Pancreas (tissue), 10 donors: ENCODE measurements at regions of chr2 and their contacts with region 1.

Region 1: GRCh38 chr2:43226558-43226954 is at the start of gene ZFP36L2:
- DNase-seq: peak; percentile 95 to 99 (median 98)
- ATAC-seq: peak; percentile 66 to 79 (median 74)
- H3K4me3 ChIP-seq: peak within 1 kb of the TSS; percentile 87 to 98 (median 92)
- H3K27ac ChIP-seq: peak within 1 kb of the TSS; percentile 86 to 98 (median 96)
- H3K4me1 ChIP-seq: peaks cover 21 to 24% (median 21%) of the 10 kb centered on the region in 3 donors
- H3K27me3 ChIP-seq: no peaks in the 10 kb centered on the region
- CTCF ChIP-seq: no peak
- total RNA-seq, gene ZFP36L2: 36.8 to 117 (median 64.8) TPM

Region 2: DNA sequence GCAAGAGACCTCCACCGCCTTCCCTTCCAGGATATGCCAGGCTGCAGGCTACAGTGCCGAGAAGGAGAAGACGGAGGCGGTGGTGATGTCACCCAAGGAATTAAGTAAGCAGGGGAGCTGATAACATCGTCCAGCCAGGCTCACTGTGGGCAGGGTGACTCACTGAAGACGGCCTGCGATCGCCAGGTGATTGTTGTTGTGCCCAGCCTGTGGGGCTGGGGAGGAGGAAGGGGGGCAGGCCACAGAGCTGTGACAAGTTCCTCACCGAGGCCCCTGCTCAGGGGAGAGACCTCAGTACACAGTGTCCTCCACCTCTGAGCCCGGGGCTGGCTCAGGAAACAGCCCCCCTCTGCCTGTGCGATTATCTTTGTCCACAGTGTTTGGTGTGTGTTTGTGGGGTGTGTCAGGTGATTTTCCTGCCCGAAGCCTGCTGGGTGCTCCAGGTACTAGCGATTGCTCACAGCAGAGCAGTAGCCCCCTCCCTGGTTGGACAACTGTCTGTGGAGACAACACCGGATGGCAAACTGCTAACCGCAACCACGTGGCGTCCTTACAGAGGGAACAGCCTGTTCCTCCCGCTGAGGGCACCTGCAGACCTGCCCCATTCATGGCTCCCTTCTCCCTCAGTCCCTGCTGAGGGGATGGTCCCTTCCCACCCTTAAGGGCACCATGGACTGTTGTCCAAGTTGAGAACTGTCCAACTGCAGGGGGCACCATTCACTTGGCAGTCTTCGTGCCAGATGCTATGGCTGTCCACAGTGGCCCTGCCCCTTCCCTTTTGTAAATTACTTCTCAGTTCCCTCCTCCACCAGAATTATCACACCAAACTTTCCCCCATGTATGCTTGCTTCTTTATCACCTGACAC is 95.3 kb before region 1 on chr2:
- intact Hi-C with region 1: loop called in 1 of 3 experiments (anchors 10 kb)
- DNase-seq: peak in 4 of 6 donors; percentile 63 to 69 (median 65)
- ATAC-seq: peak; percentile 62 to 80 (median 72)
- H3K4me3 ChIP-seq: no peak overlapping the region
- H3K27ac ChIP-seq: peak overlapping the region in 2 of 4 donors; percentile 51 to 67
- H3K4me1 ChIP-seq: peaks cover 0 to 20% (median 0%) of the 10 kb centered on the region in 3 donors
- H3K27me3 ChIP-seq: no peaks in the 10 kb centered on the region
- CTCF ChIP-seq: no peak